Activated B cell treated with CpG ODN at 0.5 μM for 24 hours (primary cell): ENCODE measurements at regions of chr5 and their contacts with region 1.

Region 1: GRCh38 chr5:172764849-172765765 is 5.9 kb downstream of the DUSP1 start:
- DNase-seq: peak; percentile 86
- ATAC-seq: peak; percentile 78
- H3K4me3 Mint-ChIP-seq: peak overlapping the region; percentile 84
- H3K27ac Mint-ChIP-seq: peak overlapping the region; percentile 95
- H3K4me1 Mint-ChIP-seq: peaks cover 64% of the 10 kb centered on the region
- H3K27me3 Mint-ChIP-seq: no peaks in the 10 kb centered on the region
- CTCF ChIP-seq: no peak

Region 2: GRCh38 chr5:172114875-172115422 is 650.2 kb before region 1 on chr5:
- CTCF ChIA-PET with region 1: no interaction called
- POLR2A ChIA-PET with region 1: no interaction called
- intact Hi-C with region 1: loop called (anchors 1 kb)
- DNase-seq: peak; percentile 67
- ATAC-seq: peak; percentile 49
- H3K4me3 Mint-ChIP-seq: peak overlapping the region; percentile 80
- H3K27ac Mint-ChIP-seq: peak overlapping the region; percentile 95
- H3K4me1 Mint-ChIP-seq: peaks cover 70% of the 10 kb centered on the region
- H3K27me3 Mint-ChIP-seq: no peaks in the 10 kb centered on the region
- CTCF ChIP-seq: no peak

Region 3: DNA sequence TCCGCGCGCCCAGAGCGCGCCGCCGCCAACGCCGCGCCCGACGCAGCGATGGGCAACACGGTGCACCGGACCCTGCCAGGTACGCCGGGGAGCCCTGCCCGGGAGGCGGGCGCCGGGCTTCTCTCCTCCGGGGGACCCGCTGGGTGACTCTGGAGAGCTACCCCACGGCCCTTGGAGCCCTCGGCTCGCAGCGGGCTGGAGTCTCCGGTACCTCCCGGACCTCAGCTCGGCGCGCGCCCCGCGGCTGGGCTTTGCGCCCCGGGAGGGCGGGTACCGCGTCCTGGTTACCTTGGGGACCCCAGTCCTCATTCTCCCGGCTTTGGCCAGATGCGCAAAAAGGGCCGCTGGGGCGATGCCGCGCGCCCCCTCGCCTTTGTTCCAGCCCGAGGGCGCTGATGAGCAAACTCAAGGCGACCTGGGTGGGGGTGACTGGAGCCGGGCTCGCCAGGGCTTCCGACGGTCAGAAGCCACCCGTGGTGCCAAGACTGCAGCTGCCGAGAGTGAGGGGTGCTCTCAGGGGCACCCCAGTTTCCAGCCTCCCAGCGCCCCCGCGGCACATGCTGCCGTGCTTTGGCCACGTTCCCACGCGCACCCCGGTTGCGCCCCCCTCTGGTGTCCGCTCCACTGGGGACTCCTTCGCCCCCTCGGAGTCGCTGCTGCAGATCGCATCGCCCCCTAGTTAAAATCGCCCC is 123.6 kb before region 1 on chr5:
- CTCF ChIA-PET with region 1: no interaction called
- POLR2A ChIA-PET with region 1: no interaction called
- intact Hi-C with region 1: no loop called
- DNase-seq: no peak
- ATAC-seq: no peak
- H3K4me3 Mint-ChIP-seq: no peak overlapping the region
- H3K27ac Mint-ChIP-seq: no peak overlapping the region
- H3K4me1 Mint-ChIP-seq: peaks cover 12% of the 10 kb centered on the region
- H3K27me3 Mint-ChIP-seq: peaks cover 43% of the 10 kb centered on the region
- CTCF ChIP-seq: no peak

Region 4: GRCh38 chr5:172777881-172778814 is 13.0 kb after region 1 on chr5:
- CTCF ChIA-PET with region 1: no interaction called
- POLR2A ChIA-PET with region 1: interaction called, 14 read pairs
- intact Hi-C with region 1: no loop called
- DNase-seq: no peak
- ATAC-seq: peak; percentile 6
- H3K4me3 Mint-ChIP-seq: peak overlapping the region; percentile 63
- H3K27ac Mint-ChIP-seq: peak overlapping the region; percentile 97
- H3K4me1 Mint-ChIP-seq: peaks cover 39% of the 10 kb centered on the region
- H3K27me3 Mint-ChIP-seq: no peaks in the 10 kb centered on the region
- CTCF ChIP-seq: no peak

Region 5: GRCh38 chr5:172806897-172807672 is 42.0 kb after region 1 on chr5:
- CTCF ChIA-PET with region 1: interaction called, 26 read pairs
- POLR2A ChIA-PET with region 1: interaction called, 79 read pairs
- intact Hi-C with region 1: loop called (anchors 1 kb)
- DNase-seq: peak; percentile 68
- ATAC-seq: peak; percentile 99
- H3K4me3 Mint-ChIP-seq: peak overlapping the region; percentile 82
- H3K27ac Mint-ChIP-seq: peak overlapping the region; percentile 85
- H3K4me1 Mint-ChIP-seq: peaks cover 15% of the 10 kb centered on the region
- H3K27me3 Mint-ChIP-seq: no peaks in the 10 kb centered on the region
- CTCF ChIP-seq: no peak

Region 6: GRCh38 chr5:172849606-172850453 is 84.7 kb after region 1 on chr5:
- CTCF ChIA-PET with region 1: interaction called, 15 read pairs
- POLR2A ChIA-PET with region 1: interaction called, 91 read pairs
- intact Hi-C with region 1: loop called (anchors 1 kb)
- DNase-seq: peak; percentile 58
- ATAC-seq: peak; percentile 89
- H3K4me3 Mint-ChIP-seq: peak overlapping the region; percentile 64
- H3K27ac Mint-ChIP-seq: peak overlapping the region; percentile 88
- H3K4me1 Mint-ChIP-seq: peaks cover 76% of the 10 kb centered on the region
- H3K27me3 Mint-ChIP-seq: no peaks in the 10 kb centered on the region
- CTCF ChIP-seq: no peak

Region 7: GRCh38 chr5:172951791-172952511 is 186.8 kb after region 1 on chr5:
- CTCF ChIA-PET with region 1: no interaction called
- POLR2A ChIA-PET with region 1: no interaction called
- intact Hi-C with region 1: no loop called
- DNase-seq: no peak
- ATAC-seq: no peak
- H3K4me3 Mint-ChIP-seq: no peak overlapping the region
- H3K27ac Mint-ChIP-seq: no peak overlapping the region
- H3K4me1 Mint-ChIP-seq: peaks cover 10% of the 10 kb centered on the region
- H3K27me3 Mint-ChIP-seq: no peaks in the 10 kb centered on the region
- CTCF ChIP-seq: no peak

Region 8: DNA sequence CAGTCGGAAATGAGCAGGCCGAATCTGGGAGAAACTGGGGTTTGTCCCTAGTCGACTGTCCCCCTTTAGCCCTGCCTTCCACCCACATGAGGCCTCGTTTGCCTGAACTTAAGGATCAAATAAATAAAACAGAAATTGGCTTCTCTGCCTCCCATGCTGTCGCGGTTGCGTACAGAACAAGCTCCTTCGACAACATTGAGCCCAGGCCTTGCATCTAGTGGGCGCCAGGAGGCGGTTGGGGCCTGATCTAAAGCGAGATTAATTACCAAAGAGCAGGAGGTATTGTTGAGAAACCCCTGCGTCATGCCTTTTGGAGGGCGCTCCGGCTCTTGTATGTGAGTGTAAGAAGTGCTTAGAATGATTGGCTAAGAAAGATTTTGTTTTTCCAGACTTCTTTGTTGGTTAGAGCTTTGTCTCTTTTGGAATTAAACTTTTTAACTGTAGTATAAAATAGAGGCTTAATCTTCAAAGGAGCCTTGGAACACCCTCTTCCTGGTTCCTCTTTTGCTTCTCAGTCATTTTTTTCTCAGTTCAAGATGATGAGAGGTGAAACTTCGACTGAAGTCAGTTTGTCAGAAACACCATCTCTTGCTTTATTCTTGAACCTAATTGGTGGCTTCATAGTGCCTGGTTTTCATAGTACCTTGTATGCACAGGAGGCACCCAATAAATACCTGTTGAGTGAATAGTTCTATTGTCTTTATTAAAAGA is 219.3 kb after region 1 on chr5:
- CTCF ChIA-PET with region 1: interaction called, 3 read pairs
- POLR2A ChIA-PET with region 1: interaction called, 12 read pairs
- intact Hi-C with region 1: loop called (anchors 1 kb)
- DNase-seq: peak; percentile 48
- ATAC-seq: peak; percentile 67
- H3K4me3 Mint-ChIP-seq: peak overlapping the region; percentile 98
- H3K27ac Mint-ChIP-seq: peak overlapping the region; percentile 96
- H3K4me1 Mint-ChIP-seq: peaks cover 44% of the 10 kb centered on the region
- H3K27me3 Mint-ChIP-seq: no peaks in the 10 kb centered on the region
- CTCF ChIP-seq: no peak

Region 9: DNA sequence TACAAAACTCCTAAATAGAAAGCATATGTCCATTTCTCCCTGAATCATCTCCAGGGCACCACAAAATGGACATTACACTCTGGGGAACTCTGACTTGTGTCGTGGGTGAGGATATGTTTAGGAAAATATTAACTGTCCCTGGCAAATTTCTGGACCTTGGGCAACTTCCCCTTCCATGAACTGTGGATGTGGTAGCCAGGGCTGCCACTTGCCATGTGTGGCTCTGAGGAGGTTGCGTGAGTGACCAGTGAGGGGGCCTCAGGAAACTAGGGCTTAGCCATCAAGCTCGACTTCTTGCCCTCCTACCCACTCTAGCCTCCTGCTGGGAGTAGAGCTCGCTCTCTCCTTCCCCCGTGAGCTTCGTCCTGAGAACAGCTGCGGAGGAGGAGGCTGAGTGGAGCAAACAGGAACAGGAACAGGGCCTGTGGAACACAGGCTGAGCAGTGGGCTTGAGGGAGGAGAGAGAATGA is 576.9 kb after region 1 on chr5:
- CTCF ChIA-PET with region 1: no interaction called
- POLR2A ChIA-PET with region 1: no interaction called
- intact Hi-C with region 1: no loop called
- DNase-seq: no peak
- ATAC-seq: no peak
- H3K4me3 Mint-ChIP-seq: no peak overlapping the region
- H3K27ac Mint-ChIP-seq: no peak overlapping the region
- H3K4me1 Mint-ChIP-seq: no peaks in the 10 kb centered on the region
- H3K27me3 Mint-ChIP-seq: peaks cover 16% of the 10 kb centered on the region
- CTCF ChIP-seq: no peak